Ovary (tissue), 10 donors: ENCODE measurements at regions of chr5 and their contacts with region 1.

Region 1: GRCh38 chr5:156155598-156155997 is 171.4 kb upstream of the SGCD start:
- DNase-seq: no peak
- H3K4me3 ChIP-seq: no peak overlapping the region
- H3K27ac ChIP-seq: no peak overlapping the region
- H3K4me1 ChIP-seq: no peaks in the 10 kb centered on the region
- H3K27me3 ChIP-seq: no peaks in the 10 kb centered on the region
- CTCF ChIP-seq: no peak
- EP300 ChIP-seq: no peak
- POLR2A ChIP-seq: no peak

Region 2: DNA sequence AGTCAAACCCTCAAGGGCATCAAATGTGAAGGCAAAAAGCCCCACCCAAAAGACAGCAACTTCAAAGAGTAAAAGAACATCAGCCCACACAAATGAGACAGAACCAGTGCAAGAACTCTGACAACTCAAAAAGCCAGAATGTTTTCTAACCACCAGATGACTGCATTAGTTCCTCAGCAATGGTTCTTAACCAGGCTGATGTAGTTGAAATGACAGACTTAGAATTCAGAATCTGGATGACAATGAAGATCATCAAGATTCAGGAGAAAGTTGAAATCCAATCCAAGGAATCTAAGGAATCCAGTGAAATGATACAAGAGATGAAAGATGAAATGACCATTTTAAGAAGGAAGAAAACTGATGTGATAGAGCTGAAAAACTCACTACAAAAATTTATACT is 802.4 kb before region 1 on chr5:
- intact Hi-C with region 1: loop called in 1 of 4 experiments (anchors 5 kb)
- DNase-seq: no peak
- H3K4me3 ChIP-seq: no peak overlapping the region
- H3K27ac ChIP-seq: no peak overlapping the region
- H3K4me1 ChIP-seq: no peaks in the 10 kb centered on the region
- H3K27me3 ChIP-seq: no peaks in the 10 kb centered on the region
- CTCF ChIP-seq: no peak
- EP300 ChIP-seq: no peak
- POLR2A ChIP-seq: no peak

Region 3: GRCh38 chr5:155394196-155394595 is 761.4 kb before region 1 on chr5:
- intact Hi-C with region 1: no loop called
- DNase-seq: no peak
- H3K4me3 ChIP-seq: no peak overlapping the region
- H3K27ac ChIP-seq: no peak overlapping the region
- H3K4me1 ChIP-seq: peaks cover 1% of the 10 kb centered on the region
- H3K27me3 ChIP-seq: no peaks in the 10 kb centered on the region
- CTCF ChIP-seq: no peak
- EP300 ChIP-seq: no peak
- POLR2A ChIP-seq: no peak

Region 4: DNA sequence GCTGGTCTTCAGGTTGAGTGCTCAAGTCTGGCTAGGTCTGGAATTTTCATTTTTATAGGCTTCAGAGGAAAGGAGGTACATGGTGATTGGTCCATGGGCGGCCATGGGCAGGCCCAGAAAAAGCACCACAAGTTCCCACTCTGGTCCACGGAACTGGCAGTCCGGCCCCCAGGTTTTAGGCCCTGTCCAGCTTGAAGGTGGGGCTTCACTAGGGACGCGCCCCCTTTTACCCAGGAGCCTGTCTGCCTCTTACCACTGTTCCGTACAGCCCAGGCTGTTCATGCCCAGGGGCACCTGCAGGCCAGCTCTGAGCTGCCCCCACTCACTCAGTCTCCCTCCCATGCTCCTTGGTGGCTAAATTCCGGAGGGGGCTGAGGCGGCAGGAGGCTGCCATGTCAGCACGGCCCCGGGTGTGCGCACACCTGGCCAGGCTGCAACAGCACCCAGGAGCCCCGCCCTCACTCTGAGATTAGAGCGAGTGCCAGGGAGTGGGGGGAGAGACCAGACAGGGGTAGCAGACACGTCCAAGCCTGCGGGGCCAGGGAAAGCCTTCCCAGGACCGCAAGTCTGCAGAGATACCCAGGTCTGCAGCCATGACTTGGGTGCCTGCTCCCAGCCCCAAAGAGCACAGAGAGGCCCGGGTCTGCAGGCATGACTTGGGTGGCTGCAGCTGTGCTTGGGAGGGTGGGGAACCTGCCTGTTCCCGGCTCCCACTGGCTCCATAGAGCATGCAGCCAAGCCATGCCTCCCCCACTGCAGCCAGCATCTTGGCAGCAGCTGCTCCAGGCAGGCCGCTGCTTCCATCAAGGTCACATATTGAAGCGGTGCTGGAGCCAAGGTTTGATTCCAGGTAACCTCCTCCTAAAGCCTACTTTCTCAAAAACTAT is 218.8 kb before region 1 on chr5:
- intact Hi-C with region 1: no loop called
- DNase-seq: peak in 4 of 5 donors; percentile 18 to 61 (median 30)
- H3K4me3 ChIP-seq: no peak overlapping the region
- H3K27ac ChIP-seq: no peak overlapping the region
- H3K4me1 ChIP-seq: peaks cover 7% of the 10 kb centered on the region
- H3K27me3 ChIP-seq: no peaks in the 10 kb centered on the region
- CTCF ChIP-seq: no peak
- EP300 ChIP-seq: no peak
- POLR2A ChIP-seq: no peak